Posterior vena cava (tissue), 2 donors: ENCODE measurements at regions of chr19 and their contacts with region 1.

Region 1: GRCh38 chr19:10551698-10552301 is 8.1 kb downstream of the ATG4D start:
- DNase-seq: no peak

Region 2: DNA sequence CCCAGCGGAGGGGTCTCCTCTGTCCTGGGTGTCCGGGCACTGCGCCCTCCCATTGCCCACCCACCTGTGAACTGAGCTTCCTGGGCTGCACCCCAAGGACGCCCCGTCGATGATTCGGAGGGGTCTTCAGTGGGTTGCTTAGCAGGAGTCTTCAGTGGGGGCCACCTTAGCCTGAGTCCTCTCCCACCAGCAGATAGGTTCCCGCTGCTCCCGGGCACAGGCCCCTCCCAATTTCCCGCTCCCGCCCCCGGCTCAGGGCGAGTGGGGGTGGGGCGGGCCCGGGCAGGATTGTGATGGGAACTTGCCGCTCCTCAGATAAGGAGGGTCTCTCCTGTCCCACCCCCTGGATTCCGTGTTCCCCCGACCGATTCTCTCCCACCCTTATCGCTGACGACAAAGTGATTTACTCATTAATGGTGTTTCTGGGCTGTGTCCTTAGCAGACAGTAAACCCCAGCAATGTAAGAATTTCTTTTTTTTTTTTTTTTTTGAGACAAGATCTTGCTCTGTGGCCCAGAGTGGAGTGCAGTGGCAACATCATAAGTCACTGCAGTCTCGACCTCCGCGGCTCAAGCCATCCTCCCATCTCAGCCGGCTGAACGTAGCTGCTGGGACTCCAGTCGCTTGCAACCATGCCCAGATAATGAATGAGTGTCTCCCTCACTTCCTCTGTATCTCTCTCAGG is 33.9 kb before region 1 on chr19:
- intact Hi-C with region 1: loop called in 1 of 2 experiments (anchors 2 kb)
- DNase-seq: no peak

Region 3: DNA sequence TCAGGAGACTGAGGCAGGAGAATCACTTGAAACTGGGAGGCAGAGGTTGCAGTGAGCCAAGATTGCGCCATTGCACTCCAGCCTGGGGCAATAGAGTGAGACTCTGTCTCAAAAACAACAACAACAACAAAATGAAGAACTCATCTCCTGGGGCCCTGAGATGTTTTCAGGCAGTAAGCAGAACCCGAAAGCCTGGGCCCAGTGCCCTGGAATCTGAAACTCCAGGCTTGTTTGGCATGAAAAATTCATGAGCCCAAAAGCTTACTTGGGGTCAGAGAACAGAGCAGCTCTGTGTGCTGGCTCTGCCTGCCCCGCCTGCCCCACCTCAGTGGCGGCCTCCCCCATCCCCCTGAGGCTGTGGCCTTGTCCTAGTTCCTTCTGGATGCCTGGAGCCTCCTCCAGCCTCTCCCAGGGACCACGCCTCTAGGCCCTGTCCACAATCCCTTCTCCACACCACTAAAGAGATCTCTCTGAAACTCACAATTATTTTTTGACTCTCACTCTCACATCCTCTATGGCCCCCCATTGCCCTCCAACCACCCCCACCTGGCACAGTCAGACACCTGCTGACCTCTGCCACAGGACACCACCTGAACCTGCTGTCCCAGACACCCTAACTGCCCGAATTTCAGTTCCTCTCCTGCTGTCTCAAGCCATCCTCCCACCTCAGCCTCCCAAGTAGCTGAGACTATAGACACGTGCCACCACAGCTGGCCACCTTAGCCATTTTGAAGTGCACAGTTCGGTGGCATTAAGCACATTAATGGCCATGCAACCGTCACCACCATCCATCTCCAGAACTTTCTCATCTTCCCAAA is 42.2 kb after region 1 on chr19:
- intact Hi-C with region 1: no loop called
- DNase-seq: no peak